ENCODE measurements at regions of chr19 and their contacts with region 1.

Region 1: DNA sequence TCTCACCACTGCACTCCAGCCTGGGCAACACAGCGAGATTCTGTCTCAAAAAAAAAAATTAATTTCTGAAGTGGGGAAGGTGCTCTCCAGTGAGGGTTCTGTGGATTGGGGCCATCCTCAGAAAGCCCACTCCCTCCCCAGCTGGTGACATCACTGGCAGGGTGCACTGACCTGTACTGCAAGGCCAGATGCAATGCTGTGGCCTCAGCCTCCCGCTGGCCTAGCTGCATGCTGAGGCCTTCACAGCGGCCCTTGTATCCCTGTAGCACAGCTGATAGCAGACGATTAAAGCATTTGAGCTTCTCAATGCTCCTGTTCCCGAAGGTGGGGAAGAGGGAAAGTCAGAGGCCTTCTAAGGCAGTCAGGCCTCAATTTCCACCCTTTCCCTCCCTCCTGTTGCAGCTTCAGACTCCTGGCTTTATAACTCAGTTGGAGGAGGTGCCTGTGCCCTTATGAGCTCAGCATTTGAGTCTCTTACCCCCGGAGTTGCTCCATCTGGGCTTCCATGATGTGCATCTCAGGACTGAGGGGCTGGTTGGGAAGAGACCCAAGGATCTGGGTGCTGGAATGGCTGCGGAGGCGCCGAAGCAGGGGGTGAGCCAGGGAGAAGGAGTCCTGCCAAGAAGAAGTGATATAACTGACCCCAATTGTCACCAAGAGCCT is 5.3 kb downstream of the USHBP1 start:
- DNase-seq: no peak
- H3K4me3 ChIP-seq: no peak overlapping the region
- H3K27ac ChIP-seq: no peak overlapping the region
- H3K4me1 ChIP-seq: no peaks in the 10 kb centered on the region
- H3K27me3 ChIP-seq: no peaks in the 10 kb centered on the region
- CTCF ChIP-seq: no peak

Region 2: GRCh38 chr19:18021121-18021755 is 762.0 kb after region 1 on chr19:
- CTCF ChIA-PET with region 1: interaction called, 10 read pairs
- POLR2A ChIA-PET with region 1: no interaction called
- intact Hi-C with region 1: no loop called
- DNase-seq: peak; percentile 80
- H3K4me3 ChIP-seq: no peak overlapping the region
- H3K27ac ChIP-seq: peak overlapping the region; percentile 51
- H3K4me1 ChIP-seq: peaks cover 43% of the 10 kb centered on the region
- H3K27me3 ChIP-seq: no peaks in the 10 kb centered on the region
- CTCF ChIP-seq: no peak

Measured in A673 (cell line).